GM12878 (cell line): ENCODE measurements at regions of chr17 and their contacts with region 1.

Region 1: GRCh38 chr17:8745586-8746500 is 1.2 kb upstream of the CCDC42 start:
- DNase-seq: peak; percentile 4
- ATAC-seq: peak; percentile 95
- H3K4me3 ChIP-seq: peak overlapping the region; percentile 85
- H3K27ac ChIP-seq: peak overlapping the region; percentile 30; the same call in 1 of the 2 replicates
- H3K4me1 ChIP-seq: peaks cover 5% of the 10 kb centered on the region
- H3K27me3 ChIP-seq: no peaks in the 10 kb centered on the region; a peak in 1 of 4 replicates
- CTCF ChIP-seq: peak; percentile 71 to 88 (median 82)
- EP300 ChIP-seq: no peak
- POLR2A ChIP-seq: no peak; the same call in none of the 2 replicates
- RAD21 ChIP-seq: peak; percentile 70

Region 2: DNA sequence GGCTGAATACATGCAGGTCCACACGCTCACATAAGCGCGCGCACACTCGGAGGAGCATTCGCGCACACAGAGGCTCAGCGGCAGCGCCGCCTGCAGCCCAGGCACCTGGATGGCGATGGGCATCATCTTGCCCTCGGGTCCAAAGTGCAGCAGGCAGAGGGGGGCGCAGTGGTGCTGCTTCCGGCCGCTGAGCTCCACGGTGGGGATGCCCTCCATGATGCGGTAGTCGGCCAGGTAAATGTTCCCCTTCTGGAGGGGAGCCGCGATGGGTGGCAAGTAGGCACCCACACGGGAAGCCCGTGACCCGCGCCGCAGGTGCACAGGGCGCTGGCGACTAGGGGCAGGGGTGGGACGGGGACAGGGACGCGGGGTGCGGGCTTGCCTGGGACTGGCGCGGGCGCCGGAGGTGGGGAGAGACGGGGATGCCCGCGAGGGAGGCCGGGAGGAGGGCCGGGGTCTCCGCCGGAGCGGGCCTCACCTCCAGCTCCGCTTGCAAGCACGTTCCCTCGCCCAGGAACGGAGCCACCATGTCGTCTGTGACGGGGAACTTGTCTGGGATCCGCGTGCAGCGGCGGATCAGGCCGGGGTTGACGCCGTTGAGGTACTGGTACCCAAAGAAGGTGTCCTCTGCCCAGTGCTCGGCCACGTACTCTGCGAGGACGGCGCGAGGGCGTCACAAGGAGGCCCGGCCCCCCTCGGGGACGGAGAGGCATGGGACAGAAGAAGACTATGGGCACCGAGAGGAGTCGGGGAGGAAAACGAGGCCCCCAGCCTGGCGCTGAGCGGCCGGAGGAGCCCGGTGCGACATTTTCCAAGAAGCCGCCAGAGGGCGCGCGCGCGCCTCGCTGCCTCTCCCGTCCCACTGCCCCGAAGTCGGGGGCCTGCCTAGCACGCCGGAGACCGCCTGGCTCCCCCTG is 666.3 kb before region 1 on chr17:
- CTCF ChIA-PET with region 1: no interaction called
- POLR2A ChIA-PET with region 1: no interaction called
- RAD21 ChIA-PET with region 1: no interaction called
- SMC1A ChIA-PET with region 1: no interaction called
- in situ Hi-C with region 1: loop called (anchors 10 kb)
- intact Hi-C with region 1: loop called (anchors 10 kb)
- DNase-seq: no peak
- ATAC-seq: peak; percentile 96
- H3K4me3 ChIP-seq: peak overlapping the region; percentile 75
- H3K27ac ChIP-seq: no peak overlapping the region
- H3K4me1 ChIP-seq: peaks cover 4% of the 10 kb centered on the region; the same call in 1 of the 2 replicates
- H3K27me3 ChIP-seq: peaks cover 3% of the 10 kb centered on the region in 2 experiments; a peak in 3 of 4 replicates
- CTCF ChIP-seq: peak; percentile 78 to 91 (median 90)
- EP300 ChIP-seq: no peak
- POLR2A ChIP-seq: no peak; the same call in 1 of the 2 replicates
- RAD21 ChIP-seq: peak; percentile 57

Region 3: GRCh38 chr17:8376271-8377067 is 369.4 kb before region 1 on chr17 and contains the start of gene KRABD2:
- CTCF ChIA-PET with region 1: interaction called, 10 read pairs
- POLR2A ChIA-PET with region 1: no interaction called
- RAD21 ChIA-PET with region 1: interaction called, 5 read pairs
- SMC1A ChIA-PET with region 1: no interaction called
- in situ Hi-C with region 1: no loop called
- intact Hi-C with region 1: loop called (anchors 10 kb)
- DNase-seq: peak; percentile 38
- ATAC-seq: peak; percentile 99
- H3K4me3 ChIP-seq: peak within 1 kb of the TSS; percentile 88
- H3K27ac ChIP-seq: peak within 1 kb of the TSS; percentile 72
- H3K4me1 ChIP-seq: peaks cover 3% of the 10 kb centered on the region
- H3K27me3 ChIP-seq: no peaks in the 10 kb centered on the region
- CTCF ChIP-seq: peak; percentile 62 to 77 (median 70)
- EP300 ChIP-seq: no peak
- POLR2A ChIP-seq: peak; percentile 92
- RAD21 ChIP-seq: no peak

Region 4: GRCh38 chr17:8383143-8383822 is 362.6 kb before region 1 on chr17 and contains the start of gene RPL26:
- CTCF ChIA-PET with region 1: interaction called, 21 read pairs
- POLR2A ChIA-PET with region 1: no interaction called
- RAD21 ChIA-PET with region 1: interaction called, 8 read pairs
- SMC1A ChIA-PET with region 1: no interaction called
- in situ Hi-C with region 1: no loop called
- intact Hi-C with region 1: loop called (anchors 10 kb)
- DNase-seq: peak; percentile 95
- ATAC-seq: peak; percentile 95
- H3K4me3 ChIP-seq: peak within 1 kb of the TSS; percentile 84
- H3K27ac ChIP-seq: peak within 1 kb of the TSS; percentile 80
- H3K4me1 ChIP-seq: no peaks in the 10 kb centered on the region; the same call in 1 of the 2 replicates
- H3K27me3 ChIP-seq: no peaks in the 10 kb centered on the region
- CTCF ChIP-seq: peak; percentile 77 to 96 (median 87)
- EP300 ChIP-seq: no peak
- POLR2A ChIP-seq: peak; percentile 96
- RAD21 ChIP-seq: peak; percentile 36; the same call in 1 of the 2 replicates
- polyA plus RNA-seq, gene RPL26: 3,591 to 5,060 TPM

Region 5: DNA sequence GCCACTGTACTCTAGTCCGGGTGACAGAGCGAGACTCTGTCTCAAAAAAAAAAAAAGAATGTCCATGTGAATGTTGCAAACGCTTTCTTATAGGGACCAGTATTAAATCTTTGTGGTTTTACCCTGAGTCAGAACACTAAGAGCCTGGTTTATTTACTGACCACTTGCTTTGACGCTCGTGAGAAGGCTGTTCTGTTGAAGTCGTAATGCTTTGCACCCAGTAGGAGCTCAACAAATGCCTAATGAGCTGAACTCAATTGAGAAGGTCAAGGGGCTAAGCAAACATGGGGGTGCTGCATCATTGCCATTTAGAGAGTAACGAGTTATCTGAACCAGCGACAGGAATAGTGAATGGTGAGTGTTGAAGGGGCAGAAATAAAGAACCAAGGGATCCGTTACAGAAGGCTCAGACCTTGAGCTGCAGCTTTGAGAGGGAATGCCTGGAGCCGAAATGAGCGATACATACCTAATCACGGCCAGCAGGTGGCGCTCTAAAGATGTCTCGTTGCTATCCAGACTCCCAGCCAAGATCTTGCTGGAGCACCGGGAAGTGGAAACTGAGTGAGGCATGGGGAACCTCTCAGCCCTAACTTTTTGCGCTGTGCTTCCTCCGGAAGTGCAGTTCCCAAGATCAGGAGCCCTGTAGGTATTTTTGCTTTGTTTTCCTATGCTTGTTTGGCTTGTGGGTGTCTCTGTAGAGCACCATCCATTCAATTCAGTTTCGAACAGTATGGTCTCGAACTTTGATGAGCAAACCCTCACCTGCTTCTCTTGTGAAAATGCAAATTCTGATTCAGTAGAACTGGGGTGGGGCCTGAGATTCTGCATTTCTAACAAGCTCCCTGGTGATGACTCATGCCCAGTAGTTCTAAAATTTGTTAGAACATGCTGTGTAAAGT is 335.6 kb before region 1 on chr17:
- CTCF ChIA-PET with region 1: interaction called, 67 read pairs
- POLR2A ChIA-PET with region 1: no interaction called
- RAD21 ChIA-PET with region 1: interaction called, 34 read pairs
- SMC1A ChIA-PET with region 1: interaction called, 20 read pairs
- in situ Hi-C with region 1: loop called (anchors 5 kb)
- intact Hi-C with region 1: loop called (anchors 1 kb)
- DNase-seq: peak; percentile 17
- ATAC-seq: peak; percentile 90
- H3K4me3 ChIP-seq: no peak overlapping the region
- H3K27ac ChIP-seq: no peak overlapping the region
- H3K4me1 ChIP-seq: no peaks in the 10 kb centered on the region
- H3K27me3 ChIP-seq: peaks cover 0 to 4% of the 10 kb centered on the region in 2 experiments; a peak in 3 of 4 replicates
- CTCF ChIP-seq: peak; percentile 82 to 87 (median 83)
- EP300 ChIP-seq: 0 out of 4 replicates have a peak, but pooled peaks of 1 of the 2 experiments have one; percentile 15
- POLR2A ChIP-seq: no peak
- RAD21 ChIP-seq: peak; percentile 71

Region 6: GRCh38 chr17:8572764-8573163 is 173.1 kb before region 1 on chr17:
- CTCF ChIA-PET with region 1: interaction called, 7 read pairs
- POLR2A ChIA-PET with region 1: no interaction called
- RAD21 ChIA-PET with region 1: no interaction called
- SMC1A ChIA-PET with region 1: no interaction called
- in situ Hi-C with region 1: no loop called
- intact Hi-C with region 1: loop called (anchors 2 kb)
- DNase-seq: no peak
- ATAC-seq: no peak
- H3K4me3 ChIP-seq: no peak overlapping the region
- H3K27ac ChIP-seq: no peak overlapping the region
- H3K4me1 ChIP-seq: no peaks in the 10 kb centered on the region
- H3K27me3 ChIP-seq: no peaks in the 10 kb centered on the region
- CTCF ChIP-seq: peak in 2 of 3 experiments; percentile 7 to 31; a peak in 1 of 6 replicates
- EP300 ChIP-seq: no peak
- POLR2A ChIP-seq: no peak
- RAD21 ChIP-seq: peak; percentile 62